ENCODE measurements at regions of chr11 and their contacts with region 1.

Region 1: DNA sequence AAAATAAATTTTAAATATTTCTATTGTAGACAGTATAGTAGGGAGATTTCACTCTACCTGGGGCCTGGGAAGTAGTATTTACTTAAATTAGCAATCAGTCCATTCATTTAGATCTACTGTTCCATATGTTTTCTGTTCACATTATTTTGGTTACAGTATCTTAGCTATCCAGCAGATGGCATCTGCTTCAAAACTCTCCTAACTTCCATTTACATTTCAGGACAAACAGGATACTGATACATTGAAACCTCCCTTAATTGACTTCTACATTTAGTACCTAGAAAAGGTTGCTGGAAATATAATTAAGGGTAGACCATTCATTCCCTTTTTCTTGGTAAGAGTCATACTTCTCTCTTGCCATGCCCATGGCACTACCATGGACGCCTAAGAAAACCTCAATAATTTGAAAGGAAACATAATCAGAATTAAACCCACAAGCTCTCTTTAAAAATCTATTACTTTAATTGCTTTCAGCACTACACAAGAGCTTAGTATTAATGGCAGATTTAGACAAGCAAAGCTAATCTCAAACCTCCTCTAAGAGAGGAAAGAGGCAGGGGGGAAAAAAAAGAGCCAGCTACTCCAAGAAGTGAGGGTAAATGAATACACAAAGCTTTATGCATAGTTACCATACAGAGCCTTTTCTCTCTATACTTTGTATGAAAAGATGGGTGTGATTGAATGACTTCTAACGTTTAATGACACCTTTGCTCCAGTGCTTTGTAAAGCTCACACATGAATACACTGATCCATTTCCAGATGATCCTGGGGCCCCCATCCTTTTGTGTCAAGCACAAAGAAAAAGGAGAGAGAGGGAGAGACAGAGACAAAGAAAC is 131.2 kb upstream of the MTMR2 start:
- DNase-seq: no peak
- ATAC-seq: peak; percentile 61
- H3K4me3 ChIP-seq: no peak overlapping the region
- H3K27ac ChIP-seq: peak overlapping the region in 1 of 2 donors; percentile 63
- H3K4me1 ChIP-seq: peaks cover 6 to 9% of the 10 kb centered on the region in 2 donors
- H3K27me3 ChIP-seq: no peaks in the 10 kb centered on the region

Region 2: GRCh38 chr11:96102664-96103078 is 47.6 kb after region 1 on chr11:
- intact Hi-C with region 1: loop called in 1 of 2 experiments (anchors 5 kb)
- DNase-seq: no peak
- ATAC-seq: no peak
- H3K4me3 ChIP-seq: no peak overlapping the region
- H3K27ac ChIP-seq: no peak overlapping the region
- H3K4me1 ChIP-seq: peaks cover 9 to 19% of the 10 kb centered on the region in 2 donors
- H3K27me3 ChIP-seq: no peaks in the 10 kb centered on the region

Region 3: GRCh38 chr11:96154802-96155520 is 99.9 kb after region 1 on chr11:
- intact Hi-C with region 1: loop called in 1 of 2 experiments (anchors 5 kb)
- DNase-seq: peak in 1 of 2 donors; percentile 64
- ATAC-seq: no peak
- H3K4me3 ChIP-seq: no peak overlapping the region
- H3K27ac ChIP-seq: peak overlapping the region in 1 of 2 donors; percentile 47
- H3K4me1 ChIP-seq: peaks cover 7 to 8% of the 10 kb centered on the region in 2 donors
- H3K27me3 ChIP-seq: no peaks in the 10 kb centered on the region

Region 4: DNA sequence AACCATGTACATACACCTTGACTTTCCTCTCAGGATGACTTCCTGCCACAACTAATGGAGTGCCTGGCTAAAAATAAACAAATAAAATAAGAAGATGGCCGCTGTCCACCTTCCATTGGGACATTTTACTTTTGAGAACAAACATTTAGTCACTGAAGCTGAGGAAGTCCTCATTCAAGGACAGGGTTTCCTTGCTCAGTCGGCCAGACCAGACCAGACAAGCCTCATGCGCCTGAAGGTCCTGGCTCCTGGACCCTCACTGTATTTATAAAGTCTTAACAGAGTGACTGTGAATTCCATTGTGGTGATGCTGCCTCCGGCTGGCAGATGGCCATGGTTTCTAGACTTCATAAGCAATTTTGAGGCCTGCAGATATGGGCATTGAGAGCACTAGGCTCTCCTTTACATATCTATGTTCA is 173.4 kb after region 1 on chr11:
- intact Hi-C with region 1: loop called in 1 of 2 experiments (anchors 10 kb)
- DNase-seq: peak; percentile 86 to 94
- ATAC-seq: peak; percentile 82
- H3K4me3 ChIP-seq: no peak overlapping the region
- H3K27ac ChIP-seq: peak overlapping the region; percentile 92 to 93
- H3K4me1 ChIP-seq: peaks cover 2 to 7% of the 10 kb centered on the region in 2 donors
- H3K27me3 ChIP-seq: no peaks in the 10 kb centered on the region

Region 5: GRCh38 chr11:96242971-96243647 is 188.0 kb after region 1 on chr11:
- intact Hi-C with region 1: loop called in 1 of 2 experiments (anchors 10 kb)
- DNase-seq: peak; percentile 97 to 98
- ATAC-seq: peak; percentile 97
- H3K4me3 ChIP-seq: peak overlapping the region in 1 of 2 donors; percentile 39
- H3K27ac ChIP-seq: peak overlapping the region in 1 of 2 donors; percentile 85
- H3K4me1 ChIP-seq: peaks cover 4 to 9% of the 10 kb centered on the region in 2 donors
- H3K27me3 ChIP-seq: no peaks in the 10 kb centered on the region

Region 6: GRCh38 chr11:96424693-96425092 is 369.6 kb after region 1 on chr11:
- intact Hi-C with region 1: no loop called
- DNase-seq: no peak
- ATAC-seq: no peak
- H3K4me3 ChIP-seq: no peak overlapping the region
- H3K27ac ChIP-seq: no peak overlapping the region
- H3K4me1 ChIP-seq: no peaks in the 10 kb centered on the region
- H3K27me3 ChIP-seq: no peaks in the 10 kb centered on the region

Measured in aorta (tissue), 5 donors.